AG04449 (cell line): ENCODE measurements at regions of chr10 and their contacts with region 1.

Region 1: DNA sequence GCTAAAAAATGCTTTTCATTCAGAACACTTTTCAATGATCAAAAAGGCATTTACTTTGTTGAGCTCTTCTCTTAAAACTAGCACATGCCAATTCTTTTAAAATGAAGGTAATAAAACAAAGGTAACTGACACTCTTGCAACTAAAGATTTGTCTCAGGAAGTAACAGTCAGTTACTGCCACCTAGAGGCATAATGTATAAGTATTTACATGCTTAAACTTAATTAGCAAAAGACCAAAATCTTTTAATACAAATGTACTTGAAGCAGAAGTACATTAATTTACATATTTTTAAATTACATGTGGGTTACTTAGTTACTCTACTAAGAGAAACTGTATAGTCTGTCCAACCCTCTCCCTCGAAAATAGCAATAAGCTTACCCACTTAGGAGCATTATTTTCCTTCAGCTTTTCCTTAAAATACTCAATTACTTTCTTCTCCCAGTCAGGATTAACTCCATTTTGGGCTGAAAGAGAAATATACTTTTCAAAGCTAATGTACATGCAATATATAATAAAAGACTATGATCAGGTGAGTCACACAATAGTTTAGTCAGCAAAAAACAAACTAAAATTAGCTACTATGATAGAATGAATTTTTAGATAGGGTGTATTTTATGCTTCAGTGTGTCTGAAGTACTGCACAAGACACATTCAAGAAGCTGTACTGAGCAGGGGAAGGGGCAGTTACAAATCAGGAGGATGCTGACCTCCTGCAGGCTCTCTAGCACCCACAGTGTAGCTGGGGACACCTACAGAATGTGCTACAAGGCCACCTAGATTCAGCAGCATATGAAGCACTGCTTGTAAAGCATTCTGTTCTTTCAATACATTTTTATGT is 13.0 kb downstream of the MCMBP start:
- DNase-seq: no peak
- H3K4me3 ChIP-seq: no peak overlapping the region
- CTCF ChIP-seq: peak; percentile 18

Region 2: DNA sequence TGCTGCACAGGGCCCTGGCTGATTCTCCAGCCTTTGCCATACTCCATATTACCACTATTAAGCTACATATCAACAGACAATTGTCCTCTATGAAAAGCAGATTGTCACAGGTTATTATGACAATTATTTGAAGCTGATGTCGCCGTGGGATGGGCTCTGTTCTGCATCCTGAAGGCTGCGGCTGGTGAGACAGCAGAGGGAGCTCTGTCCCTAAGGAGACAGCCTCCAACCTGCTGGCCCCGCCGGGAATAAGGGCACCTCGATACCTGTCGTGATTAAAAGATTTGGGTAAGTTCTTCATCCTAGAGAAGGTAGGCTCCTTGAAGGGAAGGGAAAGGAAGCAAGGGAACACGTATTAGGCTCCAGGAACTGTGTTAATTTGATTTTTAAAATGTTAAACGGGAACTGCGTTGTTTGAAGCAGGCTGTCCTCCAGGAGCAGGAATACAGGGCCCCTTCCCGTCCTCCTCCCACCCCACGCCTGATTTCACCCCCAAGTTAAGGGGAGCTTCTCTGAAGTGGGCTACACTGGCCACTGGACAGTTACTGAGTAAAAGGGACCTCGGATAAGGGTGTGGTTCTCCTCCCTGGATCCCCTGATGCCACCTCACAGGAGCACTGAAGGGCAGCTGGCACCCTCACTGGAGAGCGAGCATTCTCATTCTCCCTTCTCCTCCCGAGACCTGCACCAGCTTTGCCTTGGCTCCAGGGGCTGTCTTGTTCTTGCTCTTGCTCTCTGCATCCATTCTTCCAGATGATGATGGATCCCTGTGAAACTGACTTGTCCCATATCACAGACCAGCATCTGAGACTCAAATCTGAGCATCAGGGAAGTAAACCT is 251.1 kb before region 1 on chr10:
- CTCF ChIA-PET with region 1: interaction called, 33 read pairs
- POLR2A ChIA-PET with region 1: no interaction called
- DNase-seq: no peak
- H3K4me3 ChIP-seq: no peak overlapping the region
- CTCF ChIP-seq: peak; percentile 59

Region 3: GRCh38 chr10:119667562-119668328 is 191.9 kb before region 1 on chr10:
- CTCF ChIA-PET with region 1: interaction called, 12 read pairs
- POLR2A ChIA-PET with region 1: no interaction called
- DNase-seq: peak; percentile 79
- H3K4me3 ChIP-seq: peak overlapping the region; percentile 33
- CTCF ChIP-seq: peak; percentile 14

Region 4: GRCh38 chr10:119725828-119726675 is 133.6 kb before region 1 on chr10 and contains the start of gene INPP5F:
- CTCF ChIA-PET with region 1: interaction called, 13 read pairs
- POLR2A ChIA-PET with region 1: no interaction called
- DNase-seq: peak; percentile 73
- H3K4me3 ChIP-seq: peak within 1 kb of the TSS; percentile 69
- CTCF ChIP-seq: peak; percentile 36

Region 5: GRCh38 chr10:119750391-119751230 is 109.0 kb before region 1 on chr10:
- CTCF ChIA-PET with region 1: interaction called, 664 read pairs
- POLR2A ChIA-PET with region 1: no interaction called
- DNase-seq: peak; percentile 36
- H3K4me3 ChIP-seq: no peak overlapping the region
- CTCF ChIP-seq: peak; percentile 90

Region 6: DNA sequence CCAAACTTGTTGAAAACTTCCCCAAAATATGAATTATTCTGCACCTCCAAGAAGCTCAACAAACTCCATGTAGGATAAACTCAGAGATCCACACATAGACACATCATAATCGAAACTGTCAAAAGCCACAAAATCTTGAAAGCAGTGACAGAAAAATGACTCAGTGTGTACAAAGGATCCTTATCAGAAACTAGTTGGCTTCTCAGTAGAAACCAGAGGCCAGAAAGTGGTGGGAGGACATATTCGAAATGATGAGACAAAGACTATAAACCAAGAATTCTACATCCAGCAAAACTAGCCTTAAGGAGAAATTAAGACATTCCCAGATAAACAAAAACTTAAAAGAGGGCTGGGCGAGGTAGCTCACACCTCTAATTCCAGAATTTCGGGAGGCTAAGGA is 25.5 kb before region 1 on chr10:
- CTCF ChIA-PET with region 1: interaction called, 11 read pairs
- POLR2A ChIA-PET with region 1: no interaction called
- DNase-seq: no peak
- H3K4me3 ChIP-seq: no peak overlapping the region
- CTCF ChIP-seq: no peak

Region 7: GRCh38 chr10:119908166-119908565 is 48.5 kb after region 1 on chr10:
- CTCF ChIA-PET with region 1: no interaction called
- POLR2A ChIA-PET with region 1: no interaction called
- DNase-seq: no peak
- H3K4me3 ChIP-seq: no peak overlapping the region
- CTCF ChIP-seq: no peak

Region 8: GRCh38 chr10:119969609-119970008 is 110.0 kb after region 1 on chr10:
- CTCF ChIA-PET with region 1: no interaction called
- POLR2A ChIA-PET with region 1: no interaction called
- DNase-seq: no peak
- H3K4me3 ChIP-seq: no peak overlapping the region
- CTCF ChIP-seq: no peak